Panc1 (cell line): ENCODE measurements at regions of chr5 and their contacts with region 1.

Region 1: GRCh38 chr5:111530298-111530740 is 18.0 kb upstream of the STARD4 start:
- DNase-seq: no peak
- ATAC-seq: 0 out of 2 replicates have a peak, but pooled peaks have one; percentile 62
- H3K4me3 ChIP-seq: no peak overlapping the region
- H3K27ac ChIP-seq: no peak overlapping the region
- H3K4me1 ChIP-seq: no peaks in the 10 kb centered on the region
- H3K27me3 ChIP-seq: no peaks in the 10 kb centered on the region
- CTCF ChIP-seq: no peak

Region 2: GRCh38 chr5:111211341-111211740 is 319.0 kb before region 1 on chr5:
- CTCF ChIA-PET with region 1: interaction called, 11 read pairs
- POLR2A ChIA-PET with region 1: no interaction called
- in situ Hi-C with region 1: no loop called
- intact Hi-C with region 1: no loop called
- DNase-seq: no peak
- ATAC-seq: no peak
- H3K4me3 ChIP-seq: no peak overlapping the region
- H3K27ac ChIP-seq: no peak overlapping the region
- H3K4me1 ChIP-seq: no peaks in the 10 kb centered on the region
- H3K27me3 ChIP-seq: 0 out of 2 replicates have a peak, but pooled peaks cover 2% of the 10 kb centered on the region
- CTCF ChIP-seq: no peak

Region 3: DNA sequence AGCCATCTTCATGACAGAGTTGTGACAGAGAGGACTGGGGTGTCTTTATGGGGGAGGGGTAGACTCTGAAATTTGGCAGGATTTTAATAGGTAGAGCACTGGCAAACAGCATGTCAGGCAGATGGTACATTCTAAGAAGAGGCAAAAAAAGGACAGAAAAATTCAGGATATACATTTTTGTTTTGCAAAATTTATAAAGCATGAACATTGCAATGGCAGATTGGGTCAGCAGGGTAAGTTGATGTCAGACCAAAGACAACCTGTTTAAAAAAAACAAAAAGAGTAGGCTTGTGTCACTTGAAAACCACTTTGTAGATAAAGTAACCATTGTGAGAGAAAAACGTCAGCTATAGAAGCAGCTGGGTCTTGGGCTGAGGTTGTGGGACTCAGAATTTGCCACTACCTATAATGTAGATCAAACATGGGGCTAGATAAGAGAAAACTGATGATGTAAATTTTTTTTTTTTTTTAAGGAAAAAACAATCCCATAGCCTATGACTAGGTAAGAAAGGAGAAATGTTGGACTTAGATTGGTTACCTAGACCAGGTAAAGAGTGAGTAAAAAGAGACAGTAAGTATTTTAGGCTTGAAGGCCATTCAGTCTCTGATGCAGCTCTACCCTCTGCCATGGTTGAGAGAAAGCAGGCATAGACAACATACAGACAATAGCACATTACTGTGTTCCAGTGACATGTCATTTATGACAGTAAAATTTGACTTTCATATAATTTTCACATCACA is 297.8 kb before region 1 on chr5:
- CTCF ChIA-PET with region 1: interaction called, 12 read pairs
- POLR2A ChIA-PET with region 1: no interaction called
- in situ Hi-C with region 1: no loop called
- intact Hi-C with region 1: no loop called
- DNase-seq: no peak
- ATAC-seq: no peak
- H3K4me3 ChIP-seq: no peak overlapping the region
- H3K27ac ChIP-seq: no peak overlapping the region
- H3K4me1 ChIP-seq: no peaks in the 10 kb centered on the region
- H3K27me3 ChIP-seq: peaks cover 10% of the 10 kb centered on the region
- CTCF ChIP-seq: no peak

Region 4: DNA sequence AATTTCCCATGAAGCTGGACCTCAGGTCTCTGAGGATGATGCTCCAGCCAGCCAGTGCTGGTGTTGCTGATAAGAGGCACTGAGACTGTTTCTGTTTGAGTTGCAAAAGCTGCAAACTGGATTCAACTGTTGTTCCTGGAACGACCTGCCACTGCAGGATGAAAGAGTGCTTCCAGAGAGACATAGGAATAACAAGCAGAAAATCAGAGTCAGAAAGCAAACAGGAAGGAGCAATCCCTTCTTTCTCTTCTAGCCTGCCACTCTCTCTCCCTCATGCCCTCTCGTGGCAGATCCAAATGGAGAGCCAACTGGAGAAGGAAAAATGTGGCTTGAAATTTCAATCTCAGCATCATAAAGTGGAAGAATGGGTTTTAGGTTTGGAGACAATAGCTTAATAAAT is 128.4 kb before region 1 on chr5:
- CTCF ChIA-PET with region 1: interaction called, 12 read pairs
- POLR2A ChIA-PET with region 1: no interaction called
- in situ Hi-C with region 1: no loop called
- intact Hi-C with region 1: no loop called
- DNase-seq: no peak
- ATAC-seq: no peak
- H3K4me3 ChIP-seq: no peak overlapping the region
- H3K27ac ChIP-seq: no peak overlapping the region
- H3K4me1 ChIP-seq: no peaks in the 10 kb centered on the region
- H3K27me3 ChIP-seq: no peaks in the 10 kb centered on the region
- CTCF ChIP-seq: no peak

Region 5: DNA sequence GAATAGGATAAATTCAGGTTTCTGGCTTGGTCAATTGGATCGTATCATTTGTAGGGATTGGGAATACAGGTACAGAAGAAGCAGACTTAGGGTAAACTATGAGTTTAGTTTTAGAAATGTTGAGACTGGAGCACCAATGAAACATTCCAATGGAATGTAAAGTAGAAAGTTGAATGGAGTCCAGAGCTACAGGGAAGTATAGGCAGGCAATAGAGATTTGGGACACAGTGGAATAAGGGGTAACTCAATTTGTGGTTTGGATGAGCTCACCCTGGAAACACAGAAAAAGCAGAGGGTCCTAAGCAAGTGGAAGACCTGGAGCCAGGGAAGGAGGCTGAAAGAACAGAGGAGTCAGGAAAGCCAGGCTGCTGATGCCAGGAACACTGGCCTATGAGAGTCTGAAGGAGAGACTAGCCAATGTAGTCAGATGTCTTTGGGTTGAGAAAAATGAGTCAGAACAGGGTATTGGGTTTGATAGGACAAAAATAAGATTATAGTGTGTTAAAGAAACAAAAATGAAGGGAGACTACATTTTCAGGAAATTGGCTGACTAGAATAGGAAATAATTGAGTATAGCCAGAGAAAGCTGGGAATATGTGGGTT is 90.7 kb before region 1 on chr5:
- CTCF ChIA-PET with region 1: no interaction called
- POLR2A ChIA-PET with region 1: no interaction called
- in situ Hi-C with region 1: no loop called
- intact Hi-C with region 1: no loop called
- DNase-seq: no peak
- ATAC-seq: no peak
- H3K4me3 ChIP-seq: no peak overlapping the region
- H3K27ac ChIP-seq: no peak overlapping the region
- H3K4me1 ChIP-seq: no peaks in the 10 kb centered on the region
- H3K27me3 ChIP-seq: no peaks in the 10 kb centered on the region
- CTCF ChIP-seq: no peak

Region 6: GRCh38 chr5:111589316-111589715 is 59.0 kb after region 1 on chr5:
- CTCF ChIA-PET with region 1: no interaction called
- POLR2A ChIA-PET with region 1: no interaction called
- in situ Hi-C with region 1: no loop called
- intact Hi-C with region 1: no loop called
- DNase-seq: no peak
- ATAC-seq: no peak
- H3K4me3 ChIP-seq: no peak overlapping the region
- H3K27ac ChIP-seq: no peak overlapping the region
- H3K4me1 ChIP-seq: no peaks in the 10 kb centered on the region
- H3K27me3 ChIP-seq: no peaks in the 10 kb centered on the region
- CTCF ChIP-seq: no peak

Region 7: DNA sequence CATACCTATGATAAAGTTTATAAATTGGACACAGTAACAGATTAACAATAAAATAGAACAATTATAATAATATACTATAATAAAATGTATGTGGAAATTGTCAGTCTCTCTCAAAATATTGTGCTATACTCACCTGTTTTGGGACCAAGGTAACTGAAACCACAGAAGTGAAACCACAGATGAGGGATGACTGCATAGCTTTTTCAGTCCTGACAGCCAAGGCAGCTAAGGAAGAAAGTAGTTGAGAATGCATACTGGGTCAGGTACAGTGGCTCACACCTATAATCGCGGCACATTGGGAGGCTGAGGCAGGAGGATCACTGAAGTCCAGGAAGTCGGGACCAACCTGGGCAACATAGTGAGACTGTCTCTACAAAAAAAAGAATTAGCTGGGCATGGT is 1339.6 kb after region 1 on chr5:
- CTCF ChIA-PET with region 1: interaction called, 20 read pairs
- POLR2A ChIA-PET with region 1: no interaction called
- in situ Hi-C with region 1: no loop called
- intact Hi-C with region 1: no loop called
- DNase-seq: no peak
- ATAC-seq: no peak
- H3K4me3 ChIP-seq: no peak overlapping the region
- H3K27ac ChIP-seq: no peak overlapping the region
- H3K4me1 ChIP-seq: no peaks in the 10 kb centered on the region
- H3K27me3 ChIP-seq: no peaks in the 10 kb centered on the region
- CTCF ChIP-seq: no peak